Brain microvascular endothelial cell (primary cell): ENCODE measurements at regions of chr1 and their contacts with region 1.

Region 1: GRCh38 chr1:224513787-224514209 is 79.2 kb upstream of the WDR26 start:
- DNase-seq: peak; percentile 72
- H3K4me3 ChIP-seq: no peak overlapping the region
- H3K27ac ChIP-seq: no peak overlapping the region
- H3K27me3 ChIP-seq: no peaks in the 10 kb centered on the region
- CTCF ChIP-seq: peak; percentile 94

Region 2: GRCh38 chr1:224623743-224624333 is 110.0 kb after region 1 on chr1:
- in situ Hi-C with region 1: loop called (anchors 25 kb)
- DNase-seq: peak; percentile 96
- H3K4me3 ChIP-seq: peak overlapping the region; percentile 13
- H3K27ac ChIP-seq: peak overlapping the region; percentile 86
- H3K27me3 ChIP-seq: no peaks in the 10 kb centered on the region
- CTCF ChIP-seq: no peak

Region 3: GRCh38 chr1:224851210-224851847 is 337.5 kb after region 1 on chr1:
- in situ Hi-C with region 1: loop called (anchors 25 kb)
- DNase-seq: peak; percentile 18
- H3K4me3 ChIP-seq: no peak overlapping the region
- H3K27ac ChIP-seq: no peak overlapping the region
- H3K27me3 ChIP-seq: no peaks in the 10 kb centered on the region
- CTCF ChIP-seq: peak; percentile 93